ENCODE measurements at regions of chr2 and their contacts with region 1.

Region 1: GRCh38 chr2:9799665-9800632 is 43.3 kb upstream of the TAF1B start:
- DNase-seq: peak; percentile 88 to 93
- H3K4me3 ChIP-seq: no peak overlapping the region
- H3K4me3 Mint-ChIP-seq: peak overlapping the region; percentile 56
- H3K27ac Mint-ChIP-seq: no peak overlapping the region
- H3K4me1 ChIP-seq: peaks cover 45% of the 10 kb centered on the region
- H3K4me1 Mint-ChIP-seq: peaks cover 29% of the 10 kb centered on the region
- H3K27me3 ChIP-seq: no peaks in the 10 kb centered on the region
- H3K27me3 Mint-ChIP-seq: no peaks in the 10 kb centered on the region
- CTCF ChIP-seq: peak; percentile 95 to 99

Region 2: GRCh38 chr2:9555297-9556141 is 244.4 kb before region 1 on chr2 and contains the start of gene ADAM17:
- CTCF ChIA-PET with region 1: no interaction called
- POLR2A ChIA-PET with region 1: no interaction called
- intact Hi-C with region 1: no loop called
- DNase-seq: peak; percentile 97 to 98
- H3K4me3 ChIP-seq: peak within 1 kb of the TSS; percentile 92
- H3K4me3 Mint-ChIP-seq: peak within 1 kb of the TSS; percentile 91
- H3K27ac Mint-ChIP-seq: peak within 1 kb of the TSS; percentile 90
- H3K4me1 ChIP-seq: peaks cover 27% of the 10 kb centered on the region; the same call in 1 of the 2 replicates
- H3K4me1 Mint-ChIP-seq: peaks cover 30% of the 10 kb centered on the region
- H3K27me3 ChIP-seq: no peaks in the 10 kb centered on the region
- H3K27me3 Mint-ChIP-seq: no peaks in the 10 kb centered on the region
- CTCF ChIP-seq: peak; percentile 61 to 69
- total RNA-seq, gene ADAM17: 36.3 and 40.5 TPM in 2 replicates

Region 3: GRCh38 chr2:9770308-9771100 is 29.4 kb before region 1 on chr2:
- CTCF ChIA-PET with region 1: interaction called, 21 read pairs
- POLR2A ChIA-PET with region 1: no interaction called
- intact Hi-C with region 1: loop called (anchors 2 kb)
- DNase-seq: peak; percentile 68 to 73
- H3K4me3 ChIP-seq: no peak overlapping the region
- H3K4me3 Mint-ChIP-seq: no peak overlapping the region
- H3K27ac Mint-ChIP-seq: no peak overlapping the region
- H3K4me1 ChIP-seq: 0 out of 2 replicates have a peak, but pooled peaks cover 6% of the 10 kb centered on the region
- H3K4me1 Mint-ChIP-seq: peaks cover 7% of the 10 kb centered on the region
- H3K27me3 ChIP-seq: no peaks in the 10 kb centered on the region
- H3K27me3 Mint-ChIP-seq: no peaks in the 10 kb centered on the region
- CTCF ChIP-seq: peak; percentile 69 to 83

Region 4: DNA sequence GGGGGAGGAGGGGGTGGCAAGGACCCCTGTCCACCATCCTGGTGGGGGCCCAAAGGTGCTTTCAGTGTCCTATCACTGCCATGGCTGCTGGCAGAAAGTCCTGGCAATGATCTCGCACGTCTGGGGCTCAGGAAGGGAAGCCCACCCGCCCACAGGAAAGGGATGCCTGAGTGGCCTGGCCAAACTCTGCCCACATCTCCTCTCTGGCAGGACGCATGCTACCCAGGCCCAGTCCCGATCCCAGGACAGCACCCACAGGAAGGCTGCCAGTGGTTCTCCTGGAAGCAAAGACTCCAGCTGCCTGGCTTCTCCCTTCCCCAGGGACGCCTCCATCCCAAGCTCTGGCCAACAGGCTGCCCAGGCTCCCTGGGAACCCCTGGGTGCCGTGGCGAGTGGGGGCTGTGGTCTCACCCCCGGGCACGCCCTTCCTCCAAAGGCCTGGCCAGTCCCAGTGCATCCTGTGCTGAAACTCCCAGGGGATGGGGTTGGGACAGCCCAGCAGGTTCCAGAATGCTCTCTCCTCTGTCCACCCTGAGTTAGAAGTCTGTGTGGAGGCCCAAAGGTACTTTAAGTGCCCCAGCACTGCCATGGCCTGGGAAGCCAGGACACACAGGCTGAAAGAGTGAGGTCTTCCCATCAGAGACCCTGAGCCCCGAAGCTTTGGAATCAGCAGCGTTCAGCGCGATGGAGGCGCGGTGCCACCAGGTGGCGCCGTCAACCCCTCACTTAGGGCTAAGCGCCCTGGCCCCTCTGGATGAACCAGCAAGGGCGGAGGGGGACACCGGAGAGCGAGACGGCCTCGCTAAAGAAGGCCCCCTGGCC is 13.6 kb after region 1 on chr2:
- CTCF ChIA-PET with region 1: interaction called, 17 read pairs
- POLR2A ChIA-PET with region 1: no interaction called
- intact Hi-C with region 1: no loop called
- DNase-seq: peak; percentile 66 to 81
- H3K4me3 ChIP-seq: 0 out of 2 replicates have a peak overlapping the region, but pooled peaks have one; percentile 21
- H3K4me3 Mint-ChIP-seq: peak overlapping the region; percentile 28
- H3K27ac Mint-ChIP-seq: no peak overlapping the region
- H3K4me1 ChIP-seq: no peaks in the 10 kb centered on the region
- H3K4me1 Mint-ChIP-seq: no peaks in the 10 kb centered on the region
- H3K27me3 ChIP-seq: no peaks in the 10 kb centered on the region
- H3K27me3 Mint-ChIP-seq: no peaks in the 10 kb centered on the region
- CTCF ChIP-seq: peak; percentile 95 to 96

Region 5: DNA sequence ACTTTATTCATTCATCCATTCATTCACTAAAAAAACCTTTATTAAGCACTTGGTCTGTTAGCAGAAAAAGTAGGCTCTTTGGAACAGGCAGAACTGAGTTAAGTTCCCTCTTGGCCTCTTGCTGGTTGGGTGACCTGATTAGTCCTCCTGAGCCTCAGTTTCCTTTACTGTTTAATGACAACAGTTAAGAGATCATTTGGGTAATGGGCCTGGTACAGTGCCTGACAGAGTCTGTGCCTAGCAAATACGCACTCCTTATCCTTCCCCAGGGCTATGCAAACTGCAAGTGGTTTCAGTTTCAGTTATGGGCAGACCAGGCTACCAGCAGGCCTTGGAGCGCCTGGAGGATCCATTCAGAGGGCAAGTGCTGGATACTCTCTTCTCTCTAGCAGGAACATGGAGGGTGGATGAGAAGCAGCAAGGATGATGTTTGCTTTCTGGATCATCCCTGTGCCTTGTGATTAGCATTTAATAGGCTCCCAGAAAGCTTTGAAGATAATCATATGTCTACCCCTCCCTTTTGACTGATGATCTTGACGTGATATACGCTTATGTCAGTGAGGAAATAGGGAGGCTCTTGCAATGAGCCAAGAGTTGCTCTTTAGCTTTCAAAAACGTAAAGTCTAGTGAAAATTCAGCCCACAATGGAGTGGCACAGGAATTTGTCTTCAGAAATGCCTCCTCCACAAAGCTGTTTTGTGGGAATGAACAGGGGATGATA is 30.9 kb after region 1 on chr2:
- CTCF ChIA-PET with region 1: interaction called, 3 read pairs
- POLR2A ChIA-PET with region 1: no interaction called
- intact Hi-C with region 1: loop called (anchors 1 kb)
- DNase-seq: peak in 1 of 2 experiments; percentile 41
- H3K4me3 ChIP-seq: no peak overlapping the region
- H3K4me3 Mint-ChIP-seq: no peak overlapping the region
- H3K27ac Mint-ChIP-seq: peak overlapping the region; percentile 65
- H3K4me1 ChIP-seq: peaks cover 27% of the 10 kb centered on the region
- H3K4me1 Mint-ChIP-seq: peaks cover 21% of the 10 kb centered on the region
- H3K27me3 ChIP-seq: no peaks in the 10 kb centered on the region
- H3K27me3 Mint-ChIP-seq: no peaks in the 10 kb centered on the region
- CTCF ChIP-seq: no peak

Region 6: GRCh38 chr2:9951272-9951972 is 151.5 kb after region 1 on chr2 and contains the start of gene GRHL1:
- CTCF ChIA-PET with region 1: no interaction called
- POLR2A ChIA-PET with region 1: no interaction called
- intact Hi-C with region 1: loop called (anchors 5 kb)
- DNase-seq: peak; percentile 92 to 98
- H3K4me3 ChIP-seq: peak within 1 kb of the TSS; percentile 86
- H3K4me3 Mint-ChIP-seq: peak within 1 kb of the TSS; percentile 79
- H3K27ac Mint-ChIP-seq: peak within 1 kb of the TSS; percentile 7
- H3K4me1 ChIP-seq: peaks cover 26% of the 10 kb centered on the region
- H3K4me1 Mint-ChIP-seq: peaks cover 14% of the 10 kb centered on the region
- H3K27me3 ChIP-seq: no peaks in the 10 kb centered on the region
- H3K27me3 Mint-ChIP-seq: peaks cover 4% of the 10 kb centered on the region
- CTCF ChIP-seq: no peak
- total RNA-seq, gene GRHL1: 10.5 and 11.6 TPM in 2 replicates